Psoas muscle (tissue), 8 donors: ENCODE measurements at regions of chr3 and their contacts with region 1.

Region 1: DNA sequence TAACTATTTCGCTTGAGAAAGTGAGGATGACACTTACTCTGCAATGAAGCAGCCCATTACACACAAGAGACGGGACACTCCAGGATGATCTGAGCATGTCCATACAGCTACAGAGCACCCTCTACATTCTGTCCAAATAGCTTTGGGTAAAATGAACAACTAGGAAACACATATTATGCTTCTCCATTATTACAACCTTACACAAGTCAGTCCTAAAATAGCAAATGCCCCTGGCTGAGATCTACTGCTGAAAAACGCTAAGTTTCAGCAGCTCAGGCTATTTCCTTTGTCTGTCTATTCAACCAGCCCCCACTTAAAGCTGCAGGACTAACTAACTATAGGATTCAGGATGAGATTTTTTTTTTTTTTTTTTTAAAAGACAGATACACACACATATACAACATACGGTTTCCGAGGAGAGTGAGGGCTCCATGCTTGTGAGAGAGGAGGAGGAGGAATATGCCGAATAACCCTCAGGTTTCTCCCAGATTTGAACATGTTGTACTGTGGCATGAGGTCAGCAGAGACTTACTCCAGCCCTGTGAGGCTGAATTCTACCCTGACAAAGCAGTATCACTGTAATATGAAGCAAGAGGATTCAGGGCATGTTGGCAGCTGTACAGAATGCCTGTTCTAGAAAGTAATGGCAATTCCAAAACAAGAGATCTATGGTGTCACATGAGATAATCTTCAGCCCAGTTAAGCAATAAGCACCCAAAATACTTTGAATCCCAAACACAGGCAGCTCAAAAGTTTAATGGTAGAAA is 117.3 kb upstream of the PLXND1 start:
- DNase-seq: peak in 1 of 2 donors; percentile 44
- ATAC-seq: peak; percentile 93 to 95 (median 95)
- H3K4me3 ChIP-seq: peak overlapping the region; percentile 65
- H3K27ac ChIP-seq: peak overlapping the region; percentile 73
- H3K4me1 ChIP-seq: peaks cover 26% of the 10 kb centered on the region
- H3K27me3 ChIP-seq: no peaks in the 10 kb centered on the region
- CTCF ChIP-seq: no peak

Region 2: GRCh38 chr3:129650256-129650872 is 73.4 kb before region 1 on chr3:
- intact Hi-C with region 1: loop called in 1 of 2 experiments (anchors 5 kb)
- DNase-seq: peak; percentile 66 to 72
- ATAC-seq: peak; percentile 53 to 81 (median 71)
- H3K4me3 ChIP-seq: no peak overlapping the region
- H3K27ac ChIP-seq: no peak overlapping the region
- H3K4me1 ChIP-seq: peaks cover 44% of the 10 kb centered on the region
- H3K27me3 ChIP-seq: no peaks in the 10 kb centered on the region
- CTCF ChIP-seq: peak; percentile 64

Region 3: GRCh38 chr3:129663026-129663446 is 60.7 kb before region 1 on chr3:
- intact Hi-C with region 1: loop called in 1 of 2 experiments (anchors 5 kb)
- DNase-seq: no peak
- ATAC-seq: peak; percentile 30 to 56 (median 46)
- H3K4me3 ChIP-seq: peak overlapping the region; percentile 52
- H3K27ac ChIP-seq: peak overlapping the region; percentile 94
- H3K4me1 ChIP-seq: peaks cover 60% of the 10 kb centered on the region
- H3K27me3 ChIP-seq: no peaks in the 10 kb centered on the region
- CTCF ChIP-seq: no peak

Region 4: GRCh38 chr3:129688271-129688895 is 35.4 kb before region 1 on chr3:
- intact Hi-C with region 1: loop called in 1 of 2 experiments (anchors 5 kb)
- DNase-seq: peak; percentile 69 to 81
- ATAC-seq: peak; percentile 62 to 78 (median 66)
- H3K4me3 ChIP-seq: peak overlapping the region; percentile 62
- H3K27ac ChIP-seq: peak overlapping the region; percentile 81
- H3K4me1 ChIP-seq: peaks cover 51% of the 10 kb centered on the region
- H3K27me3 ChIP-seq: no peaks in the 10 kb centered on the region
- CTCF ChIP-seq: no peak